ENCODE measurements at regions of chr10 and their contacts with region 1.

Region 1: DNA sequence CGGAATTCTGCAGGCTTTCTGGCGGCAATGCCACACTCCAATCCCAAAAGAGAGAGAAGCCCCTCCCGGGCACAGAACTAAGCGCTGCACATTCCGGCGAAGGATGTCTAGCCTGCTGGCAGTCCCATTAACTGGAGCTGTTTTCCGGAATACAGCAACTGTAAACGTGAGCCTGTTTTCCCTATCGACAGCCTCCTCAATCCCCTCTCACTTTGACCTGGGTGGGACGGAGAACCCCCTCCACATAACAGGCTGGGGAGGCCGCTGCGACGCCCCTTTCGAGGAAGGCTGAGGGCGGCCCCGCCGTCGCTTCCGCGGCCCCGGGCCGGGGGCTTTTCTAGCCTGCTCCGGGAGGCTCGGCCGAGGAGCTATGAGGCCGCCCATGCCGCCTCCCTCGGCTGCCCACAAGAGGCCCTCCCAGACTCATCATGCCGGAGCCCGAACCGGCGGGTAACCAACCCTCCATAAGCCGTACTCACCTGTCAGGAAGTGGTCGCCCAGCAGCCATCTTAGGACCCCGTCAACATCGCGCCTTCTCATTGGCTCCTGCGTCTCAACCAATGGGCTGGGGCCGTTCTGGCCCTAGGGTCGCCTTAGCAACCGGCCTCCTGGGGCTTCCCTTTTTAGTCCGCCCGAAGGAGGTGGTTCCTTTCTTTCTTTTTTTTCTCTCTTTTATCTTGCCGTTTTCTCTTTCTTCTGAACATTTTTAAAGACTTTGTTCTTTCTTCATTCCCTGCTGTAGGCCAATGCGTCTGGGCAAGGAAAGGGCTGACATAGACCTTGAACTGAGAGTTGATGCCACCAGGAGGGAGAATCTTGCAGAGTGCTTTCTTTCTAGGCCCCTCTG is at the start of gene FAM204A:
- DNase-seq: peak; percentile 95 to 99 (median 97)
- ATAC-seq: peak; percentile 94
- H3K4me3 ChIP-seq: peak within 1 kb of the TSS; percentile 81 to 86
- H3K4me3 Mint-ChIP-seq: peak within 1 kb of the TSS; percentile 96
- H3K27ac ChIP-seq: peak within 1 kb of the TSS; percentile 51 to 72
- H3K27ac Mint-ChIP-seq: peak within 1 kb of the TSS; percentile 95
- H3K4me1 ChIP-seq: peaks cover 22% of the 10 kb centered on the region
- H3K4me1 Mint-ChIP-seq: peaks cover 53% of the 10 kb centered on the region
- H3K27me3 ChIP-seq: no peaks in the 10 kb centered on the region
- H3K27me3 Mint-ChIP-seq: no peaks in the 10 kb centered on the region
- CTCF ChIP-seq: no peak
- total RNA-seq, gene FAM204A: 44.8 to 51.7 TPM

Region 2: DNA sequence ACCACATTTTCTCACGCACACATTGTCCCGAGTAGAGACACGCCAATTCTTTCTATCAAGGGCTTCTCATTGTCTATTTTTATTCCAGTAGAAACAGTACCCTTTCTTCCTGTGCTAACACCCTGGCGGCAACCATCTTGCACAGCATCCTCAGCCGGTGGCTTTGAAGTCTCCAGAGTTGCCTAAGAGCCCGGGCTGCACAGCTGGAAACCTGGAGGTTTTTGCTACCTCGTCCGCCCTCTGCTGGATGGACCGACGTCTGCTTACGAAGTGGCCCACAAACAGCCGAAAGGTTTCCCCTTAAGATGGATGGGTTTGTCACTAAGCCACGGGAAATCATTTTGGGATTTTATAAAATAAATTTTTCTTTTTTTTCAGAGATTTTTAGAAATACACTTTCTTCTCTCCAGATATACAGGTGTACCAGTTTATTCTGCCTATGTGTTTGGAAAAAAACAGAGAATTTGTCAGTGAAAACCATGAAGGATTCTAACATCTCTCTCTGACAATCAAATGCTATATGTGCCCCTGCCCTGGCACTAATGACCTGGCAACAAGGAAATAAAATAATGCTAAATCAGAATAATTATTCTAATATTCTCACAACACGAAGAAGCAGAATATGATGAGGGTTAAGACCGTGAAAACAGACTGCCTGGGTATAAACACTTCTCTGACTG is 81.9 kb after region 1 on chr10:
- CTCF ChIA-PET with region 1: no interaction called
- POLR2A ChIA-PET with region 1: no interaction called
- intact Hi-C with region 1: loop called in 1 of 2 experiments (anchors 2 kb)
- DNase-seq: peak; percentile 10 to 69 (median 55)
- ATAC-seq: peak; percentile 69
- H3K4me3 ChIP-seq: no peak overlapping the region
- H3K4me3 Mint-ChIP-seq: no peak overlapping the region
- H3K27ac ChIP-seq: no peak overlapping the region
- H3K27ac Mint-ChIP-seq: no peak overlapping the region
- H3K4me1 ChIP-seq: no peaks in the 10 kb centered on the region
- H3K4me1 Mint-ChIP-seq: no peaks in the 10 kb centered on the region
- H3K27me3 ChIP-seq: no peaks in the 10 kb centered on the region
- H3K27me3 Mint-ChIP-seq: peaks cover 16% of the 10 kb centered on the region
- CTCF ChIP-seq: peak; percentile 68

Measured in CD8-positive, alpha-beta T cell (primary cell).